ENCODE measurements at regions of chr12 and their contacts with region 1.

Region 1: GRCh38 chr12:15575671-15576541 is 213.3 kb downstream of the EPS8 start:
- DNase-seq: no peak
- H3K4me3 ChIP-seq: no peak overlapping the region
- H3K27ac ChIP-seq: no peak overlapping the region
- H3K4me1 ChIP-seq: no peaks in the 10 kb centered on the region
- H3K27me3 ChIP-seq: no peaks in the 10 kb centered on the region
- CTCF ChIP-seq: no peak

Region 2: DNA sequence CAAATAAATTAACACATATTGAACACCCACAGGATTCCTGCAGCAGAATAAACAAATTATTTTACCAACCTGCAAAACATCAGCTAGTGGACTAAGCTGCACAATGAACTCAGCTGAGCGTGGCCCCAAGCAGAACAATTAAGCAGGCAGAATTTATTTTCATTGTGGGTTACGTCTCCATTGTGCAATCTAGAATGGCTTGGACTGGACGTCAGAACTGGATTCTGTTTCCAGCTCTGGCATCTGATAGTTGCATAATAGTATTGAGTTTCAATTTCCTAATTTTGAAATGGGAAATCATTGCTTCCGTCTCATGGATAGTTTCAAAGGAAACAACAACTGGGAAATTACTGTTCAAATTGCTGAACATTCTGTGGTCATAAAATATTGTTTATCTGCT is 319.1 kb before region 1 on chr12:
- intact Hi-C with region 1: no loop called
- DNase-seq: no peak
- H3K4me3 ChIP-seq: no peak overlapping the region
- H3K27ac ChIP-seq: no peak overlapping the region
- H3K4me1 ChIP-seq: no peaks in the 10 kb centered on the region
- H3K27me3 ChIP-seq: no peaks in the 10 kb centered on the region
- CTCF ChIP-seq: no peak

Region 3: GRCh38 chr12:15393037-15393436 is 182.9 kb before region 1 on chr12:
- intact Hi-C with region 1: loop called (anchors 10 kb)
- DNase-seq: no peak
- H3K4me3 ChIP-seq: no peak overlapping the region
- H3K27ac ChIP-seq: no peak overlapping the region
- H3K4me1 ChIP-seq: peaks cover 0 to 12% of the 10 kb centered on the region in 2 donors
- H3K27me3 ChIP-seq: no peaks in the 10 kb centered on the region
- CTCF ChIP-seq: no peak

Region 4: GRCh38 chr12:15488481-15488880 is 87.4 kb before region 1 on chr12:
- intact Hi-C with region 1: no loop called
- DNase-seq: no peak
- H3K4me3 ChIP-seq: no peak overlapping the region
- H3K27ac ChIP-seq: no peak overlapping the region
- H3K4me1 ChIP-seq: no peaks in the 10 kb centered on the region
- H3K27me3 ChIP-seq: no peaks in the 10 kb centered on the region
- CTCF ChIP-seq: no peak

Region 5: DNA sequence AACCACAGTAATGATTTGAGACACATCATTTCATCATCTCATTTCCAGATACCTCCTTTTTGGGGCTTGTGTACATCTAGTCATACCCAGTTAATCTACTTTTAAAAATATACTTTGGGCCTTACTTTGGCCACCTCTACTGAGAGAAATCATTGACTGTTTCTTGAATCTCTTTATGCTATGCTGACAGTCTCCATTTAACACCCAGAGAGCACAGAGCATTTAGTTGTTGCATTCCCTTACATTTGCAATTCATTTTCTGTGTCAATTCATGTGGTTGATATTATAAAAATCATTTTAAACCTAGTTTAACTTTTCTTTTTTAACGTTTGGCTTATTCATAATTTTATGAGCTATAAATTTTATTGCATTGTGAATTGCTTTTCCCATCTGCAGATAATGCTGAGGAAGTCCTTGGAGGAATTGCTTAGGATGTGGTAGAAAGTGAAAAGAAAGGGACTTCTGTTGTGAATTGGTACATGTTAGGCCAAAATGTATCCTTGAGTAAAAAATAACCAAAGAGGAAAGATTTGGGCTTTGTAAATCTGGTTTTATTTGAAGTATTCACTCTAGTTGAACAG is 718.6 kb after region 1 on chr12:
- intact Hi-C with region 1: no loop called
- DNase-seq: no peak
- H3K4me3 ChIP-seq: no peak overlapping the region
- H3K27ac ChIP-seq: no peak overlapping the region
- H3K4me1 ChIP-seq: no peaks in the 10 kb centered on the region
- H3K27me3 ChIP-seq: no peaks in the 10 kb centered on the region
- CTCF ChIP-seq: no peak